ENCODE measurements at regions of chr12 and their contacts with region 1.

Region 1: DNA sequence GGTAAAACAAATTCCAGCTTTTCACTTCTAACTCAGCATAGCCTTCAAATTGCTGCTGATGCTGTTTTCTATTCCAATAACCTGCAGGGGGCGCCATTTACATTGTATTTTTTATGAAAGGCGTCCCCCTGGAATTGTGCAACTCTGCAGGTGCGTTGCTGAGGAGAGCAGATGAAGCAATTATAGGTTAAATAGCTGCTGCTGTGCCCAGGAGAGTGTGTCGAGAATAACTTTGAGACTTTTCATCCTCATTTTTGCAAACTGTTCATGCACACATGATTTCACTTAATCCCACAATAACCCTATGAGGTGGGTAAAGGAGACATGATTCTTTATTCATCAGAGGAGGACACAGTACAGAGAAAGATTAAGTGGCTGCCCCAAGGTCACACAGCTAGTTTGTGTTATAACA is 75.7 kb downstream of the MYRFL start:
- DNase-seq: peak; percentile 69
- H3K4me3 Mint-ChIP-seq: no peak overlapping the region
- H3K27ac Mint-ChIP-seq: no peak overlapping the region
- H3K4me1 Mint-ChIP-seq: no peaks in the 10 kb centered on the region
- H3K27me3 Mint-ChIP-seq: peaks cover 4% of the 10 kb centered on the region

Region 2: GRCh38 chr12:69884386-69884785 is 16.3 kb before region 1 on chr12:
- CTCF ChIA-PET with region 1: interaction called, 11 read pairs
- DNase-seq: no peak
- H3K4me3 Mint-ChIP-seq: no peak overlapping the region
- H3K27ac Mint-ChIP-seq: no peak overlapping the region
- H3K4me1 Mint-ChIP-seq: no peaks in the 10 kb centered on the region
- H3K27me3 Mint-ChIP-seq: peaks cover 15% of the 10 kb centered on the region

Region 3: GRCh38 chr12:70576346-70577282 is 675.9 kb after region 1 on chr12:
- CTCF ChIA-PET with region 1: interaction called, 33 read pairs
- DNase-seq: no peak
- H3K4me3 Mint-ChIP-seq: no peak overlapping the region
- H3K27ac Mint-ChIP-seq: no peak overlapping the region
- H3K4me1 Mint-ChIP-seq: no peaks in the 10 kb centered on the region
- H3K27me3 Mint-ChIP-seq: no peaks in the 10 kb centered on the region

Measured in activated naive CD4-positive, alpha-beta T cell treated with anti-CD3 and anti-CD28 coated beads, Interleukin-2, amount 10 ng/mL, durations not matched to agents 7 days and 5 days (primary cell).